ENCODE measurements at regions of chr7 and their contacts with region 1.

Region 1: DNA sequence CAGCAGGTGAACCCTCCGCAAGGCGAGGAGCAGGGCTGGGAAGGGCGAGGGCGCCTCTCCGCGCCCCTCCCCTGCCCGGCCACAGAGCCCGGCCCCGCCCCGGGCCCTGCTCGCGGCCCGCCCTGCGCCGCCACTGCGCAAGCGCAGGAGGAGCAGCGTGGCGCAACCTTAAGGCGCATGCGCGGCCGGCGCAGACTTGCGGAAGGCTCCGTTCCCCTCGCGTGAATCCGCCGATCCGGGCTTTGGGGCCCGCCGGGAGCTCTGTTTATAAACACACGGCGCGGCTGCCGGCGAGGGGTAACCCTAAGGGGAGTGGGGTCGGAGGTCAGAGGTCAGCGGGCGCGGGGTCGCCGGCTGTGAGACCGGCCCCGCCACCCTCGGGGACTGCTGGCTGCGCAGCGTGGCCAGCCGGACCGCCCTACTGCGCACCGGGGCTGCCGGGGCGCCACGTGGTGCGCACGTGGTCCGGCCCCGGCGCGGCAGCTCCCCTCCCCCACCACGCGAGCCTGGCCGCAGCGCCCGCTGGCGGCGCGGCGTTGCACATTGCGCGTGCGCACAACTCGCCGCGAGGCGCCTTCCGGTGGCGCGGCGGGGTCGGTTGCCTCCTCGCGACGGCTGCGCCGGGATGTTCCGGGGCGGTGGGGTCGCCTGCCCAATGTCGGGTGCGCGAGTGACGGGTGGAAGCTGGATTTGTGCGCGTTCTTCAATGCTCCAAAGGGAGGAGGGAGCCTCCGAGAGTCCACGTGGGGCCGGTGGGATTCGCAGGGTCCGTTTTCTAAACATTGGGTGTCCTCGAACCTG is 40.2 kb upstream of the FOXK1 start:
- DNase-seq: peak; percentile 73 to 96
- ATAC-seq: peak; percentile 95 to 96
- H3K4me3 ChIP-seq: peak overlapping the region; percentile 57
- H3K27ac ChIP-seq: peak overlapping the region; percentile 89 to 98
- H3K4me1 ChIP-seq: peaks cover 9% of the 10 kb centered on the region; the same call in 1 of the 3 replicates
- CTCF ChIP-seq: peak; percentile 65
- EP300 ChIP-seq: peak in 1 of 2 experiments; percentile 29; a peak in 1 of 5 replicates
- POLR2A ChIP-seq: peak; percentile 96
- RAD21 ChIP-seq: peak in 1 of 2 experiments; percentile 46; a peak in 2 of 5 replicates

Region 2: GRCh38 chr7:4479367-4480039 is 162.4 kb before region 1 on chr7:
- CTCF ChIA-PET with region 1: no interaction called
- POLR2A ChIA-PET with region 1: no interaction called
- DNase-seq: peak; percentile 72 to 79
- ATAC-seq: peak; percentile 74 to 90; a peak in 5 of 6 replicates
- H3K4me3 ChIP-seq: no peak overlapping the region
- H3K27ac ChIP-seq: no peak overlapping the region
- H3K4me1 ChIP-seq: no peaks in the 10 kb centered on the region
- CTCF ChIP-seq: peak; percentile 65
- EP300 ChIP-seq: no peak
- POLR2A ChIP-seq: no peak
- RAD21 ChIP-seq: peak; percentile 71

Region 3: GRCh38 chr7:4670791-4671190 is 28.9 kb after region 1 on chr7:
- CTCF ChIA-PET with region 1: interaction called, 15 read pairs
- POLR2A ChIA-PET with region 1: interaction called, 5 read pairs
- DNase-seq: no peak
- ATAC-seq: no peak
- H3K4me3 ChIP-seq: no peak overlapping the region
- H3K27ac ChIP-seq: no peak overlapping the region
- H3K4me1 ChIP-seq: peaks cover 7% of the 10 kb centered on the region
- CTCF ChIP-seq: no peak
- EP300 ChIP-seq: no peak
- POLR2A ChIP-seq: no peak
- RAD21 ChIP-seq: no peak

Region 4: GRCh38 chr7:4689668-4690067 is 47.8 kb after region 1 on chr7:
- CTCF ChIA-PET with region 1: interaction called, 12 read pairs
- POLR2A ChIA-PET with region 1: interaction called, 48 read pairs
- DNase-seq: no peak
- ATAC-seq: no peak; a peak in 1 of 6 replicates
- H3K4me3 ChIP-seq: no peak overlapping the region
- H3K27ac ChIP-seq: no peak overlapping the region
- H3K4me1 ChIP-seq: peaks cover 44% of the 10 kb centered on the region
- CTCF ChIP-seq: no peak
- EP300 ChIP-seq: no peak
- POLR2A ChIP-seq: no peak
- RAD21 ChIP-seq: no peak

Region 5: DNA sequence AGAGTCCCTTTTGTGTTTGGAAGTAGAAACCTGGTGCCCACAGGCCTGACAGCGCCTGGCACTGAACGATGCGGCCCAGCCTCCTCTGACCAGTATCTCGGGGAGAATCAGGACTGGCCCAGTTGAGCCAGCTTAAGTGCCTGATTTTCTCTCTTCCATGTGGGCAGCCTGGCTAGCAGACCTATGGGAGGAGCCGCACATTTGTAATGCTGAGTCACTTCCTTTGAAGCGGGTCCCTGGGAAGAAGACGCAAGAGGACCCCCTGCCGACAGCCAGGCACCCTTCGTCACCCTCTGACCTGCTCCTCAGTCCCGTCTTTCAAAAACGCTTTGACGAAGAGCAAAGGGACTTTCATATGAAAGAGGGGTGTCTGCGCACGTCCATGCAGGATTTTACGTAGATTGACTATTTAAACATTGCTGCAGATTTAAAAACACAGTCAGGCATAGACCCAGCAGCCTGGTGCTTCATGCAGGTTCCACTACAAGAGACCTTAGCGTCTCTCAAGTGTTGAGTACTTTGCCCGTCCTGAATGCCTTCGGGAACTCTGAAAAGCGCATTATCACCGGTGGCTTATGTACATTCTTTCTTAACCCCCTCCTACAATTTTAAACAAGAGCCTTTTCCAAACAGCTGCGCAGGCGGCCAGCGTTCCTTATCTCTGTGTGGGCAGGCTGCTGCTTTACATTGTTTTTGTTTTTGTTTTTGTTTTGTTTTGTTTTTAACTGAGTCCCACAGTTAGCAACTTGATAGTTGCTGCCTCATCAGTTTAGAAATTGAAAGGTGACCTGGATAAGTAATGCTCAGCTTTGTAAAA is 97.1 kb after region 1 on chr7:
- CTCF ChIA-PET with region 1: interaction called, 8 read pairs
- POLR2A ChIA-PET with region 1: interaction called, 15 read pairs
- DNase-seq: peak; percentile 91 to 98
- ATAC-seq: peak; percentile 87 to 88
- H3K4me3 ChIP-seq: peak overlapping the region; percentile 23; the same call in 2 of the 3 replicates
- H3K27ac ChIP-seq: peak overlapping the region; percentile 96 to 99
- H3K4me1 ChIP-seq: peaks cover 65% of the 10 kb centered on the region
- CTCF ChIP-seq: no peak
- EP300 ChIP-seq: peak; percentile 90 to 96; a peak in 4 of 5 replicates
- POLR2A ChIP-seq: 0 out of 2 replicates have a peak, but pooled peaks have one; percentile 9
- RAD21 ChIP-seq: peak; percentile 38 to 55

Region 6: GRCh38 chr7:4753711-4754432 is 112.0 kb after region 1 on chr7:
- CTCF ChIA-PET with region 1: interaction called, 18 read pairs
- POLR2A ChIA-PET with region 1: interaction called, 4 read pairs
- DNase-seq: peak; percentile 82 to 90
- ATAC-seq: peak; percentile 94 to 97
- H3K4me3 ChIP-seq: no peak overlapping the region
- H3K27ac ChIP-seq: peak overlapping the region; percentile 57 to 79
- H3K4me1 ChIP-seq: peaks cover 12% of the 10 kb centered on the region
- CTCF ChIP-seq: peak; percentile 90
- EP300 ChIP-seq: no peak
- POLR2A ChIP-seq: no peak
- RAD21 ChIP-seq: peak; percentile 93 to 94